BJ (cell line): ENCODE measurements at regions of chr6 and their contacts with region 1.

Region 1: GRCh38 chr6:41705996-41706835 is 29.2 kb downstream of the TFEB start:
- DNase-seq: no peak
- H3K4me3 ChIP-seq: no peak overlapping the region
- H3K27me3 ChIP-seq: no peaks in the 10 kb centered on the region
- CTCF ChIP-seq: peak; percentile 70

Region 2: GRCh38 chr6:41573276-41573675 is 132.9 kb before region 1 on chr6:
- CTCF ChIA-PET with region 1: no interaction called
- POLR2A ChIA-PET with region 1: interaction called, 18 read pairs
- DNase-seq: no peak
- H3K4me3 ChIP-seq: no peak overlapping the region
- H3K27me3 ChIP-seq: no peaks in the 10 kb centered on the region
- CTCF ChIP-seq: no peak

Region 3: GRCh38 chr6:41689171-41690008 is 16.8 kb before region 1 on chr6:
- CTCF ChIA-PET with region 1: interaction called, 16 read pairs
- POLR2A ChIA-PET with region 1: no interaction called
- DNase-seq: no peak
- H3K4me3 ChIP-seq: no peak overlapping the region
- H3K27me3 ChIP-seq: no peaks in the 10 kb centered on the region
- CTCF ChIP-seq: no peak

Region 4: DNA sequence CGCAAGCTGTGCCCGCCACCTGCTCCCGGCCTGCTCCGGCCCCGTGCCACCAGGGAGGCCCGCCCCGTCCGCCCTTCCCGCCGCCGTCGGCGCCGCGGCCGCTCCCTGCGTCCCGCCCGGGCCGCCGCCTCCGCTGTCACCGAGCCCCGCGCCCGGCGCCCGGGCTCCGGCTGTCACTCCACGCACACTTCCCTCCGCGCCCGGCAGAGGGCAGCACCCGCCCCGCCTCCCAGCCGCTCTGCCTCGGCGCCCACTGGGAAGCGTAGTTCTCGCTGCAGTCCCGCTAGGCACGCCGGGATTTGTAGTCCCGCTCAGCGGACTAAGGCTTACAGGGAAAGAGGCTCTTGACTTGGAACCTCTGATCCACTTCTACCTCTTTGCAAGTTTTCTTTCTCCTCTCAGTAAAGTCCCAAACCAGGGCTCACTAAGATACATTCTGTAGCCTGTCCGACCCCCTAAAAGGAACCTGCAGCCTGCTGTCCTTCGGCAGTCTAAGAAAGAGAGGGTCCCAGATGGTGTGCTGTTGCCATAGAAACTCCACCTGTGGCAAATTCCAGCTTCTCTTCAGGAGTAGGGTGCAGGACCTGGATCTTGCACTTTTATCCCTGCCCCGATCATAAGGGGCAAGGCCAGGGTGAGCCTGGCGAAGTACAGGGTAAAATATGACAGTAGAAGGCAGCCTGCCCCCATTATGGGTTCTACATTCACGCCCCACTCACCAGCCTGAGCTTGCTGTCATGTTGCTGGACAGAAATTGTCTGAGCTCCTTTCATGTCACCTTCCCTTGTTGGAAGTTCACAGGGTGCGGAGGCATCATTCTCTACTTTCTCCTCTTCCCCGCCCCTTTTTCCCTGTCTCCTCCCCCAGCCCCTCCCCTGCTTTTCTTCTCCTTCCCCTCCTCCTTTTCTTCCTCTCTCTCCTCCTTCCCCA is 29.5 kb after region 1 on chr6 and contains the start of gene TFEB:
- CTCF ChIA-PET with region 1: interaction called, 20 read pairs
- POLR2A ChIA-PET with region 1: interaction called, 3 read pairs
- DNase-seq: peak; percentile 36
- H3K4me3 ChIP-seq: peak within 1 kb of the TSS; percentile 85
- H3K27me3 ChIP-seq: no peaks in the 10 kb centered on the region; the same call in 1 of the 2 replicates
- CTCF ChIP-seq: peak; percentile 84
- polyA plus RNA-seq, gene TFEB: 13.2 and 21.9 TPM in 2 replicates